ENCODE measurements at regions of chr5 and their contacts with region 1.

Region 1: GRCh38 chr5:62385131-62385530 is 18.6 kb downstream of the DIMT1 start:
- DNase-seq: no peak
- H3K4me3 ChIP-seq: no peak overlapping the region
- H3K4me3 Mint-ChIP-seq: no peak overlapping the region
- H3K27ac ChIP-seq: no peak overlapping the region
- H3K27ac Mint-ChIP-seq: peak overlapping the region in 2 of 7 donors; percentile 10 to 29
- H3K4me1 ChIP-seq: no peaks in the 10 kb centered on the region
- H3K4me1 Mint-ChIP-seq: no peaks in the 10 kb centered on the region
- H3K27me3 ChIP-seq: no peaks in the 10 kb centered on the region
- H3K27me3 Mint-ChIP-seq: no peaks in the 10 kb centered on the region

Region 2: GRCh38 chr5:62403434-62404250 is 18.5 kb after region 1 on chr5 and contains the start of gene DIMT1:
- CTCF ChIA-PET with region 1: interaction called, 10 read pairs
- POLR2A ChIA-PET with region 1: interaction called, 25 read pairs
- intact Hi-C with region 1: no loop called
- DNase-seq: peak; percentile 91 to 95 (median 91)
- H3K4me3 ChIP-seq: peak within 1 kb of the TSS; percentile 82 to 99
- H3K4me3 Mint-ChIP-seq: peak within 1 kb of the TSS; percentile 98 to 100 (median 99)
- H3K27ac ChIP-seq: peak within 1 kb of the TSS; percentile 94
- H3K27ac Mint-ChIP-seq: peak within 1 kb of the TSS; percentile 91 to 99 (median 97)
- H3K4me1 ChIP-seq: peaks cover 16% of the 10 kb centered on the region
- H3K4me1 Mint-ChIP-seq: peaks cover 19 to 32% (median 26%) of the 10 kb centered on the region in 4 donors
- H3K27me3 ChIP-seq: no peaks in the 10 kb centered on the region
- H3K27me3 Mint-ChIP-seq: no peaks in the 10 kb centered on the region
- total RNA-seq, gene DIMT1: 27.9 to 28.4 TPM